ENCODE measurements at regions of chr19 and their contacts with region 1.

Region 1: GRCh38 chr19:40609561-40610395 is 8.6 kb downstream of the LTBP4 start:
- DNase-seq: peak; percentile 70 to 92 (median 84)
- ATAC-seq: peak; percentile 16
- H3K4me3 ChIP-seq: peak overlapping the region; percentile 61
- H3K4me3 Mint-ChIP-seq: peak overlapping the region; percentile 88
- H3K27ac ChIP-seq: peak overlapping the region; percentile 66 to 84
- H3K27ac Mint-ChIP-seq: peak overlapping the region; percentile 95
- H3K4me1 ChIP-seq: peaks cover 95% of the 10 kb centered on the region
- H3K4me1 Mint-ChIP-seq: peaks cover 78% of the 10 kb centered on the region
- H3K27me3 ChIP-seq: no peaks in the 10 kb centered on the region
- H3K27me3 Mint-ChIP-seq: no peaks in the 10 kb centered on the region
- CTCF ChIP-seq: no peak

Region 2: DNA sequence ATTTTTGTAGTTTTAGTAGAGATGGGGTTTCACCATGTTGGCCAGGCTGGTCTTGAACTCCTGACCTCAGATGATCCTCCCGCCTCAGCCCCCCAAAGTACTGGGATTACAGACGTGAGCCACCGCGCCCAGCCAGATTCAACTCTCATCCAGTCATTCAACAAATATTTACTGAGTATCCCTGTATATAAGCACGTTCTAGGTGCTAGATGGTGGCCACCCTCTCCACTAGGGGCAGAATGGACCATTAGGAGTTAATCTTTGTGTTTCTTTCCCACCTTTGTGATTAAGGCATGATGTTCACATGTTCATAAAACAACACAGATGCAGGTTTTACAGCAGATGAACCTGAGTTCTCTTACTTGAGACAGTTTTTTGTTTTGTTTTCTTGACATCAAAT is 25.8 kb before region 1 on chr19:
- CTCF ChIA-PET with region 1: no interaction called
- POLR2A ChIA-PET with region 1: no interaction called
- intact Hi-C with region 1: no loop called
- DNase-seq: no peak
- ATAC-seq: no peak
- H3K4me3 ChIP-seq: no peak overlapping the region
- H3K4me3 Mint-ChIP-seq: no peak overlapping the region
- H3K27ac ChIP-seq: no peak overlapping the region
- H3K27ac Mint-ChIP-seq: no peak overlapping the region
- H3K4me1 ChIP-seq: peaks cover 5% of the 10 kb centered on the region
- H3K4me1 Mint-ChIP-seq: no peaks in the 10 kb centered on the region
- H3K27me3 ChIP-seq: no peaks in the 10 kb centered on the region
- H3K27me3 Mint-ChIP-seq: no peaks in the 10 kb centered on the region
- CTCF ChIP-seq: no peak

Region 3: DNA sequence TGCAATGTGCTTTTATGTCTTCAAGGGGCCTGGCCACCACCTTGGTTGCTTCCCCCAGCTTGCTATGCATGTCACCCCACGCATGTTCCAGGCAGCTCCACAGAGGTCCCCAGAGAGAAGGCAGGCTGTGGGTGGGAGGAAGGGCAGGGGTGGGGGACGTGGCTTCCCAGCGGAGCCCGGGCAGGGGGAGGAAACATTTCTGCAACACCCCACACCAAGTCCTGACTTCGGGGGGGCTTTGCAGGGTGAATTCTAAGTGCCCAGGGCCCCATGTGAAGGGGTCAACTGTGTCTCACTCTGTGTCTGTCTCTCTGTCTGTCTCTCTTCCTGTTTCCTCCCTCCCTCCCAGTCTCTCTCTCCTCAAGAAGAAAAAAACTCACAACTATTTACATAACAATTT is 31.0 kb after region 1 on chr19:
- CTCF ChIA-PET with region 1: interaction called, 34 read pairs
- POLR2A ChIA-PET with region 1: no interaction called
- intact Hi-C with region 1: loop called in 1 of 2 experiments (anchors 2 kb)
- DNase-seq: peak in 2 of 14 experiments; percentile 37 to 40
- ATAC-seq: peak; percentile 37
- H3K4me3 ChIP-seq: no peak overlapping the region
- H3K4me3 Mint-ChIP-seq: no peak overlapping the region
- H3K27ac ChIP-seq: no peak overlapping the region
- H3K27ac Mint-ChIP-seq: no peak overlapping the region
- H3K4me1 ChIP-seq: peaks cover 11% of the 10 kb centered on the region
- H3K4me1 Mint-ChIP-seq: peaks cover 7% of the 10 kb centered on the region
- H3K27me3 ChIP-seq: peaks cover 0 to under 1% of the 10 kb centered on the region in 2 experiments
- H3K27me3 Mint-ChIP-seq: no peaks in the 10 kb centered on the region
- CTCF ChIP-seq: no peak

Region 4: DNA sequence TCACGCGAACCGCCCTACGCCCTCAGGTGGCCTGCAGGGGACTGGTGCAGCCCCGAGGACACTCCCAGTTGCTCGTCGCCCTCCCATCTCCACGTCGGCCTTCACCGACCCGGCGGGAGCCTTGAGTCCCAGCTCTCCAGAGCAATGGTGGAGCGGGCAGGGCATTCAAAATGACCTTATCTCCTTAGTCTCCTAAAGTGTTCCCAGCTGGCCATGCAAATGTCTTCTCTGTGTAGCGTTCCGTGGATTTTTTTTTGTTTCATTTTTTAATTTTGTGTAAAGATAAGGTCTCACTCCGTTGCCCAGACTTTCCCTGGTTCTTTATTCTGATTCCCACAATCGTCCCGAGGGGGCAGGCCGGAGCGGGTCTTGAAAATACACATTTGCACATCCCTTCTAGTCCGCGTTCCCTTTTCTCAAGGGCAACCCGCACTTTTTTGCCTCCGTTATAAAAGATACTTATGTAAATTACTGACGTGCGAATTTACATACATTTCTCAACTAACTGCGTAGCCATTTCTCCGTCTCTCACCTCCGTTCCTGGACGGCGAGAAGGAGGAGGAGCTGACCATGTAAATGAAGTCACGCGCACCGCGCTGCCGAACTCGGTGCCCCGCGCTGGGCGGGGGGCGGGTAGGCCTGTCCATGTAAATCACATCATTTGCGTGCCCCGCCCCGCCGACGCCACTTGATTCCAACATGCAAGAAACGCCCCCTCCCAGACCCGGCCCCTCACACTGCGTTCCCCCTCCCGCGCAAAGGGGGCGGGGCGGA is 188.6 kb after region 1 on chr19:
- CTCF ChIA-PET with region 1: no interaction called
- POLR2A ChIA-PET with region 1: interaction called, 5 read pairs
- intact Hi-C with region 1: loop called in 1 of 2 experiments (anchors 5 kb)
- DNase-seq: peak; percentile 100
- ATAC-seq: peak; percentile 78
- H3K4me3 ChIP-seq: peak overlapping the region; percentile 64
- H3K4me3 Mint-ChIP-seq: peak overlapping the region; percentile 92
- H3K27ac ChIP-seq: peak overlapping the region; percentile 88 to 96
- H3K27ac Mint-ChIP-seq: peak overlapping the region; percentile 98
- H3K4me1 ChIP-seq: peaks cover 47% of the 10 kb centered on the region
- H3K4me1 Mint-ChIP-seq: peaks cover 45% of the 10 kb centered on the region
- H3K27me3 ChIP-seq: no peaks in the 10 kb centered on the region
- H3K27me3 Mint-ChIP-seq: no peaks in the 10 kb centered on the region
- CTCF ChIP-seq: peak; percentile 40